ENCODE measurements at regions of chr11 and their contacts with region 1.

Region 1: GRCh38 chr11:45110562-45110961 is 35.9 kb upstream of the PRDM11 start:
- DNase-seq: peak; percentile 76
- H3K4me3 ChIP-seq: no peak overlapping the region
- H3K27ac ChIP-seq: no peak overlapping the region
- H3K4me1 ChIP-seq: no peaks in the 10 kb centered on the region
- H3K27me3 ChIP-seq: peaks cover 0 to 15% (median 0%) of the 10 kb centered on the region in 3 donors
- CTCF ChIP-seq: peak; percentile 70 to 81 (median 72)
- EP300 ChIP-seq: no peak
- POLR2A ChIP-seq: no peak

Region 2: DNA sequence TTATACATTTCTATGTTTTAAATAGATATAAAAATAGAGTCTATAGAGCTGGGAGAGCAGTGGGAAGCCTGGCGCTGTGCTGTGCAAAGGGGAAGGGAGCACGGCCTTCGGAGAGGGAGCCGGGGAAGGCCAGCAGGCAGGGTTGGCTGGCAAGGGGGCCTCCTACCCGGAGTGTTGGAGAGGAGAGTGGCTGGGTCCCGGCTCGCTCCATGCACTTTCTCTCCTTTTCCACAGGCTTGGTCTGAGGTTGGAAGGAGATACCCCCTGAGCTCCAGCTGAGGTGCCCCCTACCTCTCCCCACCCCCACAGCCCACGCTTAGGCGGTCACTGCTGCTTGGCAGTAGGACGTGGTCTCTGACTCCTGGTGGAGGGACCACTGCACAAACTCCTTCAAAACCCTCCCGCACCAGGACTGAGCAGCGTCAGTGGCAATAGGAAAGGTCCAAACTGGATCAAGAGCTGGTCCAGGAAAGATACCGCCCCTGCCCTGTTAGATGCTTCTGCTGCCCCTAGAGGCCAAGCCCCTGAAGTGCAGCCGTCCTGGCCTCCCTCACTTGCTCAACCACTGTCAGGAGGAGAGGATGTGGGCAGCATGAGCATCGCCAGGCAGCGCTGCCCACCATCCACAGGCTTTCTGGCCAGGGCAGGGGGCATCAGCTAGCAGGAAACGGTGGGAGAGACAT is 122.7 kb after region 1 on chr11:
- intact Hi-C with region 1: loop called (anchors 5 kb)
- DNase-seq: peak; percentile 86
- H3K4me3 ChIP-seq: no peak overlapping the region
- H3K27ac ChIP-seq: no peak overlapping the region
- H3K4me1 ChIP-seq: peaks cover 0 to 4% (median 0%) of the 10 kb centered on the region in 4 donors
- H3K27me3 ChIP-seq: no peaks in the 10 kb centered on the region
- CTCF ChIP-seq: peak; percentile 52 to 83 (median 60)
- EP300 ChIP-seq: no peak
- POLR2A ChIP-seq: no peak

Region 3: DNA sequence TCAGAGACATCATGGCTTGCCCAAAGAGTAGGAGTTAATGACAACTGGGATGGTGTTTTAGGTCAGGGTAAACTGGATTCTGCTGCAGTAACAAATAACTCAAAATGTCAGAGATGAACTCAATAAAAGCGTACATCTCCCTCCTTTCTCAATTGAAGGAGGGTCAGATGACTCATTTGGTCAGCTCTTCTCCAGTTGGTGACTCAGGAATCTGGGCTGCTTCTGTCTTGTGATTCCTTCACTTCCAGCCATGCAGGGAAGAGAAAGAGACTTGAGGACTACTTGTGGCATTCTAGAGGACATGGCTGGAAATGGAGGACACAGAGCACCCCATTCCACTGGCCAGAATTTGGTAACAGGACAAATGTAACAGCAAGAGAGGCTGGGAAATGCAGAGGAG is 178.8 kb after region 1 on chr11:
- intact Hi-C with region 1: loop called (anchors 1 kb)
- DNase-seq: no peak
- H3K4me3 ChIP-seq: no peak overlapping the region
- H3K27ac ChIP-seq: no peak overlapping the region
- H3K4me1 ChIP-seq: peaks cover 0 to 10% (median 8%) of the 10 kb centered on the region in 4 donors
- H3K27me3 ChIP-seq: peaks cover 13 to 59% (median 35%) of the 10 kb centered on the region in 3 donors
- CTCF ChIP-seq: no peak
- EP300 ChIP-seq: no peak
- POLR2A ChIP-seq: no peak